Thyroid gland (tissue), 4 donors: ENCODE measurements at regions of chr5 and their contacts with region 1.

Region 1: DNA sequence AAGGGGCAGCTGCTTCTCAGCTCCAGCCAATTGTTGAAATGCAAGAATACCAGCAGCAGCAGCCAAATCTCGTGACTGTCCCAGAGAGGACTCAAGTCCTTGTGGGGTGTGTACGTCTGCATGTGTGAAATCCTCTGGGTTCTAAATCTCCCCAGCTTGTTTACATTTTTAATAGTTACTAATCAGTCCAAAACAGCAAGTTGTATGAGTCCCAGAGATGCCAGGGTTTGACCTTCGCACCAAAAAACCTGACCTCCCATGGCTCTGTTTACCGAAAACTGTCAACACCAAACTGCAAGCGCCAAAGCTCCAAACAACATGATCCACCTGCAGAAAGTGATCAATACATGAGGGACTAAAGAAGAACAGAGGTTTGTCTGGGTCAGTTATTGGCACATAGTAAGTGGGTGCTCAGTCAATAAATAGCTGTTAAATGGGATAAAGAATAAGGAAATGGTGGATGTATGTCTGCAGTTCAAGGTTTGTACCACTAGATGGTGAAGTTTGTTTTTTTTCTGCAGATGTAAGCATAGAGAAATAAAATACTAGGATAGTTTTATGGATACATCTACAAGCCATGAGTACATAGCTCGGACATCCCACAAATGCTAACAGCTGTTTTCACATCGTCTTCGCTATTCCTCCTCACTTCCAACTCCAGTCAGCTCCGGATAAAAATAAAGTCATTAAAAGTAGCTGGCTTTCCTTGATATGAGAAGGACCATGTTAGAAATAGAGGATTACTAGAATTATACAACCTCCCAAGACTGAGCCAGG is 85.3 kb upstream of the ADRB2 start:
- DNase-seq: no peak
- H3K4me3 ChIP-seq: no peak overlapping the region
- H3K27ac ChIP-seq: no peak overlapping the region
- H3K4me1 ChIP-seq: no peaks in the 10 kb centered on the region
- H3K27me3 ChIP-seq: no peaks in the 10 kb centered on the region
- CTCF ChIP-seq: peak; percentile 35 to 66 (median 57)
- POLR2A ChIP-seq: no peak

Region 2: DNA sequence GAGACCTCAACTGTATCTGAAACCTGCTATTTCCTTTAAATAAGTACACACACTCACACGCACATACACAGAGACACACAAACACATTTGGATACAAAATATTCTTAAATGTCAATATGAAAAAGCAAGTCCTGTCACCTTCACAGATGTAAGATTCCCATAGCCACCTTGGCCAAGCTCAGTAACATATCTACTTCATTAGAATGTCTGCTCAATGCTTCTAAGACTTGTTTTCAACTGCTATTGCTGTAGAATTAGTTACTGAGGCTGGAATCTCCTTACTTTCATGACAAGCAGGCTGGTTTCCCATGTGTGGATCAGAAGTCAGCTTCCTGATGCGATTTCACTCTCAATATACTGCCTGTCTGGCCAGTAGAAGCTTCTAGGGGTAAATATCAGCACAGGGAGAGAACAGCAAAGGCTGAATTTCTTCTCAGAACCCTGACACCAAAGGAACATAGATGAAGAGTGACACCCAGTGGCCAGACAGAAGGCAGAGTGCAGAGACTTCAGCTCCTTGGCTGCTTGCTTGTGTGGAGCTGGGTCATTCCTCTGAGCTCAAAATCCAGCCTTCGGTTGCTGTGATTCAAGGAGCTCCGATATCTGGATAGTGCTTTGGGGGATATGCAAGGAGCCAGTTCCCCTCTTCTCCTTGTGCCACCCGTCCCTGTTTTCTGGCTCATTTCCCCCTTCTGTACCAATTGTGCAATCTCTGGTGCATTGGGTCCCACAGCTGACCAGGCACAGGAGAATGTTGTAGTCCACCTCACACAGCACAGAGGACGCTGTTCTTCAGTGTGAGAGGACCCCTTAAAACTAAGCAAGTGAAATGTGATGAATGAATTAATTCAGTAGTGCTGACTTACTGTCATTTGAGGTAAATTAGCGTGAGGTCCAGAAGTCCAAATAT is 373.5 kb after region 1 on chr5:
- intact Hi-C with region 1: loop called (anchors 10 kb)
- DNase-seq: peak; percentile 33 to 44
- H3K4me3 ChIP-seq: no peak overlapping the region
- H3K27ac ChIP-seq: no peak overlapping the region
- H3K4me1 ChIP-seq: no peaks in the 10 kb centered on the region
- H3K27me3 ChIP-seq: no peaks in the 10 kb centered on the region
- CTCF ChIP-seq: peak in 4 of 6 experiments; percentile 28 to 73 (median 59)
- POLR2A ChIP-seq: no peak